CD14-positive monocyte (primary cell): ENCODE measurements at regions of chr17 and their contacts with region 1.

Region 1: GRCh38 chr17:58200017-58200633 is 7.6 kb downstream of the EPX start:
- DNase-seq: peak; percentile 44 to 70 (median 58)
- H3K4me3 ChIP-seq: no peak overlapping the region
- H3K4me3 Mint-ChIP-seq: no peak overlapping the region
- H3K27ac ChIP-seq: no peak overlapping the region
- H3K27ac Mint-ChIP-seq: no peak overlapping the region
- H3K4me1 ChIP-seq: no peaks in the 10 kb centered on the region
- H3K4me1 Mint-ChIP-seq: peaks cover 6% of the 10 kb centered on the region
- H3K27me3 ChIP-seq: peaks cover 0 to 3% of the 10 kb centered on the region in 2 donors
- H3K27me3 Mint-ChIP-seq: peaks cover 13 to 33% (median 23%) of the 10 kb centered on the region in 3 donors
- CTCF ChIP-seq: peak; percentile 83

Region 2: DNA sequence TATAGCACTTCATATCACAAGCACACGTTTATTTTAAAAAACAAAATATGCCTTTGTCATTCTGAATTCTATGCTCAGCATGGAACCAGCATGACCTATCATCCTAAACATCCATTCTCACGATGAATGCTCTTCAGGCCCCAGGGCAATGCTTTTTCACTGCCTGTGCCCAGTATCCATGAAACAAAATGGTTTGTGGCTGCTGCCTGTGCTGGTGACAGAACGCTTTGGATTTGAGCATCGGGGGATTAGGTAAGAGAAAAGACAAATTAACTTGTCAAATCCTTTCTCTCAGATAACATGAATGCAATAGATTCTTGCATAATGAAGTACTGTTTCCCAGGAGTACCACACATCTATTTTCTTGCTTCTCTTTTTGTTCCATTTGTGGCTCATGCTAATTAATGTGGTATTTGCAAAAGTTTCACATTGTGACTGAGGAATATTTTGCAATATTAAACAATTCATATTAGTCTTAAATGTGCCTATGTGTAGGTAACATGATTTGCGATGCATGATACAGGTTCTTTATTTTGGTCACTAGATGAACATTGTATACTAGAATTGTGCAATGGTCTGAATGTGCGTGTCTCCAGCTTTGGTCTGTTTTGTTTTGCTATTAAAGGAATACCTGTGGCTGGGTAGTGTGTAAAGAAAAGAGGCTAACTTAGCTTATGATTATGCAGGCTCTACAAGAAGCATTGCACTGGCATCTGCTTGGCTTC is 167.3 kb before region 1 on chr17:
- intact Hi-C with region 1: no loop called
- DNase-seq: no peak
- H3K4me3 ChIP-seq: no peak overlapping the region
- H3K4me3 Mint-ChIP-seq: no peak overlapping the region
- H3K27ac ChIP-seq: no peak overlapping the region
- H3K27ac Mint-ChIP-seq: peak overlapping the region in 2 of 7 donors; percentile 33 to 52
- H3K4me1 ChIP-seq: peaks cover 11 to 14% of the 10 kb centered on the region in 2 donors
- H3K4me1 Mint-ChIP-seq: peaks cover 16% of the 10 kb centered on the region
- H3K27me3 ChIP-seq: no peaks in the 10 kb centered on the region
- H3K27me3 Mint-ChIP-seq: peaks cover 8 to 20% (median 14%) of the 10 kb centered on the region in 3 donors
- CTCF ChIP-seq: no peak

Region 3: DNA sequence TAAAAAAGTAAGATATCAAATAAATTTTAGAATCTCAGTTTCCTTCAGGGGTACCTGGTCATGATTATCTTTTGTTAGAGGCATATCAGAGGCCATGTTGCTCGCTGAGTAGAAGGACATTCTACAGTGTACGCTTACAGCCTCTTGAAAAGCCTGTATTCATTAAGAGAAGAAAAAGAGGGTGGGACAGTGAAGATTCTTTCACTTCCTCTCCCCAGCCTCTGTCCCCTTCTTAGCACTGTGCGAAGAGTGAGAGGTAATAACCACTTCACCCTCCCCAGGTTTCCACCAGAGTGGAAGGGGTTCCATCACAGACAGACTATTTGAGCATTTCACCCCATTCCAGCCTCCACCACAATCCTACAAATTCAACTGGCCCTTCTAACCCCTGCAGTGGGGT is 33.4 kb after region 1 on chr17:
- intact Hi-C with region 1: no loop called
- DNase-seq: peak; percentile 40 to 64 (median 57)
- H3K4me3 ChIP-seq: peak overlapping the region in 1 of 3 experiments; percentile 68
- H3K4me3 Mint-ChIP-seq: peak overlapping the region in 1 of 2 donors; percentile 39
- H3K27ac ChIP-seq: peak overlapping the region in 1 of 2 donors; percentile 90
- H3K27ac Mint-ChIP-seq: peak overlapping the region in 6 of 7 donors; percentile 7 to 97 (median 55)
- H3K4me1 ChIP-seq: peaks cover 30 to 39% of the 10 kb centered on the region in 2 donors
- H3K4me1 Mint-ChIP-seq: peaks cover 35% of the 10 kb centered on the region
- H3K27me3 ChIP-seq: peaks cover 6 to 21% of the 10 kb centered on the region in 2 donors
- H3K27me3 Mint-ChIP-seq: peaks cover 27 to 38% (median 28%) of the 10 kb centered on the region in 3 donors
- CTCF ChIP-seq: no peak

Region 4: GRCh38 chr17:58277107-58277801 is 77.1 kb after region 1 on chr17:
- intact Hi-C with region 1: no loop called
- DNase-seq: peak in 2 of 3 donors; percentile 38 to 49
- H3K4me3 ChIP-seq: peak overlapping the region in 2 of 3 experiments; percentile 3 to 74
- H3K4me3 Mint-ChIP-seq: peak overlapping the region; percentile 76 to 93
- H3K27ac ChIP-seq: peak overlapping the region; percentile 69 to 84
- H3K27ac Mint-ChIP-seq: peak overlapping the region in 6 of 7 donors; percentile 82 to 98 (median 93)
- H3K4me1 ChIP-seq: peaks cover 85 to 91% of the 10 kb centered on the region in 2 donors
- H3K4me1 Mint-ChIP-seq: peaks cover 89% of the 10 kb centered on the region
- H3K27me3 ChIP-seq: no peaks in the 10 kb centered on the region
- H3K27me3 Mint-ChIP-seq: peaks cover 0 to 3% (median 3%) of the 10 kb centered on the region in 3 donors
- CTCF ChIP-seq: peak; percentile 83

Region 5: GRCh38 chr17:58427807-58428206 is 227.7 kb after region 1 on chr17:
- intact Hi-C with region 1: no loop called
- DNase-seq: no peak
- H3K4me3 ChIP-seq: no peak overlapping the region
- H3K4me3 Mint-ChIP-seq: no peak overlapping the region
- H3K27ac ChIP-seq: no peak overlapping the region
- H3K27ac Mint-ChIP-seq: no peak overlapping the region
- H3K4me1 ChIP-seq: no peaks in the 10 kb centered on the region
- H3K4me1 Mint-ChIP-seq: no peaks in the 10 kb centered on the region
- H3K27me3 ChIP-seq: peaks cover 2 to 3% of the 10 kb centered on the region in 2 donors
- H3K27me3 Mint-ChIP-seq: peaks cover 2 to 12% (median 6%) of the 10 kb centered on the region in 3 donors
- CTCF ChIP-seq: no peak

Region 6: GRCh38 chr17:58447039-58447975 is 247.2 kb after region 1 on chr17:
- intact Hi-C with region 1: loop called (anchors 2 kb)
- DNase-seq: peak; percentile 61 to 75 (median 69)
- H3K4me3 ChIP-seq: no peak overlapping the region
- H3K4me3 Mint-ChIP-seq: no peak overlapping the region
- H3K27ac ChIP-seq: no peak overlapping the region
- H3K27ac Mint-ChIP-seq: no peak overlapping the region
- H3K4me1 ChIP-seq: no peaks in the 10 kb centered on the region
- H3K4me1 Mint-ChIP-seq: peaks cover 3% of the 10 kb centered on the region
- H3K27me3 ChIP-seq: no peaks in the 10 kb centered on the region
- H3K27me3 Mint-ChIP-seq: peaks cover 4 to 44% (median 6%) of the 10 kb centered on the region in 3 donors
- CTCF ChIP-seq: peak; percentile 75